ENCODE measurements at regions of chr19 and their contacts with region 1.

Region 1: GRCh38 chr19:17069218-17069617 is 6.0 kb downstream of the HAUS8 start:
- DNase-seq: no peak
- ATAC-seq: no peak
- H3K4me3 ChIP-seq: no peak overlapping the region
- H3K27ac ChIP-seq: no peak overlapping the region
- H3K4me1 ChIP-seq: no peaks in the 10 kb centered on the region
- H3K27me3 ChIP-seq: no peaks in the 10 kb centered on the region

Region 2: GRCh38 chr19:17164639-17165038 is 95.4 kb after region 1 on chr19:
- intact Hi-C with region 1: loop called in 1 of 2 experiments (anchors 5 kb)
- DNase-seq: no peak
- ATAC-seq: no peak
- H3K4me3 ChIP-seq: no peak overlapping the region
- H3K27ac ChIP-seq: no peak overlapping the region
- H3K4me1 ChIP-seq: no peaks in the 10 kb centered on the region
- H3K27me3 ChIP-seq: no peaks in the 10 kb centered on the region

Region 3: GRCh38 chr19:17170538-17171297 is 101.5 kb after region 1 on chr19:
- intact Hi-C with region 1: loop called (anchors 5 kb)
- DNase-seq: no peak
- ATAC-seq: no peak
- H3K4me3 ChIP-seq: no peak overlapping the region
- H3K27ac ChIP-seq: no peak overlapping the region
- H3K4me1 ChIP-seq: no peaks in the 10 kb centered on the region
- H3K27me3 ChIP-seq: no peaks in the 10 kb centered on the region

Region 4: DNA sequence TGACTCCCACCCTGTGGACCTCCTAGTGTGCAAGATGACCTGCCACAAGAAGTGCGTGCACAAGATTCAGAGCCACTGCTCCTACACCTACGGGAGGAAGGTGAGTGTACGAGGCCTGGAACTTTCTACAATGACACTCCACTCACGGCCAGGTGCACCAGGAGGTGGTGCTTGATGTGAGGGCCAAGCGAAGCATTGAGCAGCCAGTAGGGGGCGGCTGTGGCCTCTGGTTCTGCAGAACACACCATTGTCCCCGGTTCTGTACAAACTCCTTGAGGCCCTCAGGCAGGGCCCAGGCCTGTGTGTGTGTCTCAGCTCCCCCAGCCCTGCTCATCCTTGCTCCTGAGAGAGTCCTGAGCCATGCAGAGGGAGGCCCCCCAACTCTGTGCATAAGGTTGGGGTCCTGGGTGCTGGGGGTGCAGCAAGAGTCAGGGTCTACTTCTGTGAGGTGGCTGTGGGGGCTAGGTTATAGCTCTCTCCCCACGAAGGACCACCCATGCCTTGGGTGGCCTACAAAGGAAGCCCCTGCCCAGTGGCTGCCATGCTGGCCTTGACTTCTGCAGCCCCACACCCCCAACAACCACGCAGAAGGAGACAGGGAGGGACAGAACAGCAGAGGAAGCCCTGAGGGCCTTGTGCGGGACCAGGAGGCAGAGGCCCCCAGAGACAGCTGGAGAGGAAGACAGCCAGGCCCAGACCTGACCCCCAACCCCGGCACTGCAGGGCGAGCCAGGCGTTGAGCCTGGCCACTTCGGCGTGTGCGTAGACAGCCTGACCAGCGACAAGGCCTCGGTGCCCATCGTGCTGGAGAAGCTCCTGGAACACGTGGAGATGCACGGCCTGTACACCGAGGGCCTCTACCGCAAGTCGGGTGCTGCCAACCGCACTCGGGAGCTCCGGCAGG is 136.3 kb after region 1 on chr19:
- intact Hi-C with region 1: no loop called
- DNase-seq: no peak
- ATAC-seq: peak; percentile 6
- H3K4me3 ChIP-seq: no peak overlapping the region
- H3K27ac ChIP-seq: no peak overlapping the region
- H3K4me1 ChIP-seq: no peaks in the 10 kb centered on the region
- H3K27me3 ChIP-seq: no peaks in the 10 kb centered on the region

Measured in aorta (tissue), 5 donors.